B cell (primary cell): ENCODE measurements at regions of chr17 and their contacts with region 1.

Region 1: DNA sequence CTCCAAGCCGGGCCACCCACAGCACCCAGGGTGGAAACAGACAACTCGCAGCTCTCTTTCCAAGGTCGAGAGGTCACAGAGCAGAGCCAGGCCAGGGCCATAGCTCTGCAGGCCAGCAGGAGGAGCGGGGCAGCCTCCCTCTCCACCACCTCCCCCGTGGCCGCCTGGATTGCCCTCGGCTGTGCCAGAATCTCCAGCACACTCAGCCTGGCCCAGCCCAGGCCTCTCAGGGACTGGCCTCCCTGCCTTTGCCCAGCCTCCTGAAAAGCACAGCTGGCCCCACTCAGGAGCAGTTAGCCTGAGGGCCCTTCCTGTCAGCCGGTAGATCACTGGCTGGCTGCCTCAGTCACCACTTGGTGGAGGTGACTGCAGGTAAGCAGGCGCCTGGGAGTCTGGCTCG is 85.8 kb upstream of the SEC14L1 start:
- DNase-seq: no peak
- ATAC-seq: no peak
- H3K4me3 ChIP-seq: no peak overlapping the region
- H3K4me3 Mint-ChIP-seq: no peak overlapping the region
- H3K27ac ChIP-seq: no peak overlapping the region
- H3K27ac Mint-ChIP-seq: no peak overlapping the region
- H3K4me1 ChIP-seq: peaks cover 0 to 5% of the 10 kb centered on the region in 2 donors
- H3K4me1 Mint-ChIP-seq: peaks cover 2% of the 10 kb centered on the region
- H3K27me3 ChIP-seq: peaks cover 0 to 19% (median 5%) of the 10 kb centered on the region in 4 experiments
- H3K27me3 Mint-ChIP-seq: peaks cover 31% of the 10 kb centered on the region
- CTCF ChIP-seq: no peak

Region 2: DNA sequence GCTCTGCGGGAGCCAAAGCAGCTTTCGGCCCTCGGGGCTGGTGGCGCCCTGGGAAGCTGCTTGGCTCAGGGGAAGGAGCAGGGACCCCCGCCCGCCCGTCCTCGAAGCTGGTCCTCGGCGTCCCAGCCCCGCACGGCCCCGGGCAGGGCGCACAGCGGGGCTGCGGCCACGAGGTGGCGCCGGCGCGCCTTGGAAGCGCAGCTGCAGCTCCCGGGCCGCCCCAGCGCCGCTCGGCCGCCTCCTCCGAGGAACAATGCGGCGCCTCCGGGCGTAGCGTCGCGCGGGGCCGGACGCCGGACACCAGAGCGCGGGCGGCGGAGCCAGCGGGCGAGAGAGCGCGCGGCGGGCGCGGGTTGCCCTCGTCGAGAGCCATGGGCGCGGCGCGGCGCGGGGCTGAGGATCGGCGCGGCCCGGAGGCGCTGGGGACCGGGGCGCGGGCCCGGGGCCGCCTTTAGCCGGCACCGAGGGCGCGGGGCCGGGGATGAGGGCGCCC is 186.7 kb before region 1 on chr17 and contains the start of gene MGAT5B:
- CTCF ChIA-PET with region 1: interaction called, 426 read pairs
- POLR2A ChIA-PET with region 1: interaction called, 10 read pairs
- intact Hi-C with region 1: no loop called
- DNase-seq: peak; percentile 85
- ATAC-seq: peak; percentile 92
- H3K4me3 ChIP-seq: peak within 1 kb of the TSS in 3 of 5 experiments; percentile 5 to 45 (median 20)
- H3K4me3 Mint-ChIP-seq: peak within 1 kb of the TSS; percentile 84
- H3K27ac ChIP-seq: no peak within 1 kb of the TSS
- H3K27ac Mint-ChIP-seq: peak within 1 kb of the TSS; percentile 6
- H3K4me1 ChIP-seq: peaks cover 12 to 17% of the 10 kb centered on the region in 2 donors
- H3K4me1 Mint-ChIP-seq: peaks cover 17% of the 10 kb centered on the region
- H3K27me3 ChIP-seq: peaks cover 0 to 43% (median 12%) of the 10 kb centered on the region in 4 experiments
- H3K27me3 Mint-ChIP-seq: peaks cover 38% of the 10 kb centered on the region
- CTCF ChIP-seq: peak; percentile 79
- total RNA-seq, gene MGAT5B: 37.8 and 41.4 TPM in 2 replicates

Region 3: DNA sequence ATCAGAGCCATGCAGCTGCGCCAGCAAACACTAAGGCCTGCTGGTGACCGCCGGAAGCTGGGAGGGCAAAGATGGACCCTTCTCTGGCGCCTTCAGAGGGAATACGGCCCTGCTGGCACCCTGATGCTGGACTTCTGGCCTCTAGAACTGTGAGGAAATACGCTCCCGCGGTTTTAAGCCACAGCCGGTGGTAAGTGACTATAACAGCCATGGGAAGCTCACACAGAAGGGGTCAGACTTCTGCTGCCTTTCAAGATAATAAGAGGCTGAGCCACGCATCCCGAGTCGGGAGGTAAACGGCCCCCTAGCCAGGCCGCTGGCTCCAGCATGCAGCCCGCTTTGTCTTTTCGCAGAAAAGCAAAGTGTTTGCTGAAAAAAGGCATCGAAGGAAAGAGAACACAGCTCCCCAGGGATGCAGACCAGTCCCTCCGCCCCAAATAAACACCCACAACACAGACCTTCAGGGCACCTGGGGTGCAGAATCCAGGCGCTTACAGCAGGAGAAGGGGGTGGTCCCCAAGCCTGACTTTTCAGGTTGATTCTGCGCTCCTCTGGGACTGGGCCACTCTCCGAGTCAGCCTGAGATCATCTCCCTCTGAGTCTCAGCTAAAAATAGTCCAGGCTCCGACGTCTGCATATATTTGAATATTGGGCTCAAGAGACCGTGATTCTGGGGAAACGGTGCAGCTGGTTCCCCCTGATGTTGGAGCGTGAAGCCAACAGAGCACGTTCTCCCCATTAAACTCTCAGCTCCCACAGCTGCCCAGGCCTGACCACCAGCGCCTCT is 97.1 kb before region 1 on chr17:
- CTCF ChIA-PET with region 1: interaction called, 18 read pairs
- POLR2A ChIA-PET with region 1: interaction called, 3 read pairs
- intact Hi-C with region 1: loop called (anchors 10 kb)
- DNase-seq: peak; percentile 82
- ATAC-seq: peak; percentile 83
- H3K4me3 ChIP-seq: peak overlapping the region in 4 of 5 experiments; percentile 16 to 46 (median 38)
- H3K4me3 Mint-ChIP-seq: peak overlapping the region; percentile 88
- H3K27ac ChIP-seq: peak overlapping the region in 1 of 2 donors; percentile 65
- H3K27ac Mint-ChIP-seq: peak overlapping the region; percentile 86
- H3K4me1 ChIP-seq: peaks cover 31 to 32% of the 10 kb centered on the region in 2 donors
- H3K4me1 Mint-ChIP-seq: peaks cover 37% of the 10 kb centered on the region
- H3K27me3 ChIP-seq: peaks cover 0 to 10% (median 4%) of the 10 kb centered on the region in 4 experiments
- H3K27me3 Mint-ChIP-seq: peaks cover 10% of the 10 kb centered on the region
- CTCF ChIP-seq: no peak

Region 4: GRCh38 chr17:77011173-77012011 is 43.5 kb before region 1 on chr17:
- CTCF ChIA-PET with region 1: interaction called, 10 read pairs
- POLR2A ChIA-PET with region 1: no interaction called
- intact Hi-C with region 1: loop called (anchors 1 kb)
- DNase-seq: peak; percentile 35
- ATAC-seq: no peak
- H3K4me3 ChIP-seq: no peak overlapping the region
- H3K4me3 Mint-ChIP-seq: no peak overlapping the region
- H3K27ac ChIP-seq: no peak overlapping the region
- H3K27ac Mint-ChIP-seq: no peak overlapping the region
- H3K4me1 ChIP-seq: peaks cover 0 to 4% of the 10 kb centered on the region in 2 donors
- H3K4me1 Mint-ChIP-seq: peaks cover 5% of the 10 kb centered on the region
- H3K27me3 ChIP-seq: peaks cover 0 to 6% (median 2%) of the 10 kb centered on the region in 4 experiments
- H3K27me3 Mint-ChIP-seq: peaks cover 21% of the 10 kb centered on the region
- CTCF ChIP-seq: peak; percentile 56

Region 5: DNA sequence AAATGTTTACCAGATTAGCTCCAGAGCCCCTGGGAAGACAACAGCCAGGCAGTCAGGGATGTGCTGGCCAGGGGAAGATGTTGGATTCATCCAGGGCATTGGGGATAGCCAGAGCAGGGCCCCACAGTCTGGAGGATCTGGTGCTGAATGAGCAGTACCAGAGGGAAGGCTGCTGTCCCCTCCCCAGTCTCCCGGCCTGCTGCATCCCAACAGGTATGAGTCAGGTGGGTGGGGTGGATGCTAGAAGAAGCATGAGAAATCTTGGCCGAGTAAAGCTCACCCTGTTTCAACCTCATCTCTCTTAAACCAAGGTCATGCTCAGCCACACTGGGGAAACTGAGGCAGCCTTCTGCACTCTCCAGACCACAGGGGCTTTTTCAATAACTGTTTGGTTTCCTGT is 14.0 kb after region 1 on chr17:
- CTCF ChIA-PET with region 1: interaction called, 56 read pairs
- POLR2A ChIA-PET with region 1: interaction called, 3 read pairs
- intact Hi-C with region 1: no loop called
- DNase-seq: no peak
- ATAC-seq: no peak
- H3K4me3 ChIP-seq: no peak overlapping the region
- H3K4me3 Mint-ChIP-seq: no peak overlapping the region
- H3K27ac ChIP-seq: no peak overlapping the region
- H3K27ac Mint-ChIP-seq: no peak overlapping the region
- H3K4me1 ChIP-seq: no peaks in the 10 kb centered on the region
- H3K4me1 Mint-ChIP-seq: peaks cover 2% of the 10 kb centered on the region
- H3K27me3 ChIP-seq: peaks cover 0 to 16% (median 3%) of the 10 kb centered on the region in 4 experiments
- H3K27me3 Mint-ChIP-seq: peaks cover 32% of the 10 kb centered on the region
- CTCF ChIP-seq: no peak